K562 (cell line): ENCODE measurements at regions of chr15 and their contacts with region 1.

Region 1: GRCh38 chr15:59622289-59622688 is 10.7 kb downstream of the GCNT3 start:
- DNase-seq: peak; percentile 33 to 63 (median 45)
- ATAC-seq: peak; percentile 90
- H3K4me3 ChIP-seq: no peak overlapping the region
- H3K27ac ChIP-seq: no peak overlapping the region
- H3K4me1 ChIP-seq: no peaks in the 10 kb centered on the region; a peak in 1 of 5 replicates
- H3K27me3 ChIP-seq: peaks cover 23 to 27% of the 10 kb centered on the region in 2 experiments; a peak in 4 of 5 replicates
- CTCF ChIP-seq: peak; percentile 42 to 61 (median 53); a peak in 5 of 6 replicates
- EP300 ChIP-seq: no peak
- POLR2A ChIP-seq: no peak
- RAD21 ChIP-seq: peak; percentile 14 to 49; a peak in 2 of 4 replicates

Region 2: GRCh38 chr15:59539799-59540198 is 82.5 kb before region 1 on chr15:
- CTCF ChIA-PET with region 1: no interaction called
- POLR2A ChIA-PET with region 1: no interaction called
- in situ Hi-C with region 1: loop called (anchors 5 kb)
- intact Hi-C with region 1: no loop called
- DNase-seq: peak in 1 of 4 experiments; percentile 44
- ATAC-seq: no peak; the same call in 1 of the 3 replicates
- H3K4me3 ChIP-seq: no peak overlapping the region
- H3K27ac ChIP-seq: peak overlapping the region; percentile 38; the same call in 1 of the 3 replicates
- H3K4me1 ChIP-seq: peaks cover 11 to 20% of the 10 kb centered on the region in 2 experiments; a peak in 4 of 5 replicates
- H3K27me3 ChIP-seq: peaks cover 0 to 4% of the 10 kb centered on the region in 2 experiments; a peak in 1 of 5 replicates
- CTCF ChIP-seq: no peak
- EP300 ChIP-seq: no peak
- POLR2A ChIP-seq: no peak
- RAD21 ChIP-seq: no peak

Region 3: DNA sequence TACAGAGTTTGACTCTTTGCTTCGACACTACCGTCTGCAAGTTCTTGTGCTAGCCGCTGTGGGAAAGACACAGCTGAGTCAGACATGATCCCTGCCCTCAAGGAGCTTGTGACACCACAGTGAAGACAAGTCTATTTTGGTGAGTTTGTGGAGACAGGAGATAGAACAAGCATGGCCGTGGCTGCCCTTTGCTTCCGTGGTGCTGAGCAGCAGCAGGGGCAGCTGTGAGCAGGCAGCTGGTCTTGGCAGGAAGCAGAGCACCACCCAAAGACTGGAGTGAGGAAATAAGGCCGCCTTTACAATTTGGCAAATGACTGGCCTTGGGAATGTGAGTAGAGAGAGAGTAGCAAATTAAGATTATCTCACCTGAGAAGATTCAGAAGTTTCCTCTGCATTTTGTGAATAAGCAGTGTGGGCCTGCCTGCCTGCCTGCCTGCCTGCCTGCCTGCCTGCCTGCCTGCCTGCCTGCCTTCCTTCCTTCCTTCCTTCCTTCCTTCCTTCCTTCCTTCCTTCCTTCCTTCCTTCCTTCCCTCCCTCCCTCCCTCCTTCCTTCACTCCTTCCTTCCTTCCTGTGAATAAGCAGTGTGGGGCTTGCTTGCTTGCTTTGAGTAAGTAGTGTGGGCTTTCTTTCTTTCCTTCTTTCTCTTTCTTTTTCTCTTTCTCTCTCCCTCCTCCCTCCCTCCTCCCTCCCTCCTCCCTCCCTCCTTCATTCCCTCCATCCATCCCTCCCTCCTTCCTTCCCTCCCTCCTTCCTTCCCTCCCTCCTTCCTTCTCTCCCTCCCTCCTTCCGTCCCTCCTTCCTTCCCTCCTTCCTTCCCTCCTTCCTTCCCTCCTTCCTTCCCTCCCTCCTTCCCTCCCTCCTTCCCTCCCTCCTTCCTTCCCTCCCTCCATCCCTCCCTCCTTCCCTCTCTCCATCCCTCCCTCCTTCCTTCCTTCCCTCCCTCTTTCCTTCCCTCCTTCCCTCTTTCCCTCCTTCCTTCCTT is 12.3 kb before region 1 on chr15:
- CTCF ChIA-PET with region 1: no interaction called
- POLR2A ChIA-PET with region 1: interaction called, 10 read pairs
- in situ Hi-C with region 1: no loop called
- intact Hi-C with region 1: no loop called
- DNase-seq: no peak
- ATAC-seq: no peak
- H3K4me3 ChIP-seq: no peak overlapping the region
- H3K27ac ChIP-seq: no peak overlapping the region
- H3K4me1 ChIP-seq: no peaks in the 10 kb centered on the region
- H3K27me3 ChIP-seq: 0 out of 5 replicates have a peak, but pooled peaks cover 0 to 4% of the 10 kb centered on the region in 2 experiments
- CTCF ChIP-seq: no peak
- EP300 ChIP-seq: no peak
- POLR2A ChIP-seq: no peak
- RAD21 ChIP-seq: no peak